Kidney (tissue), 22 donors: ENCODE measurements at regions of chr4 and their contacts with region 1.

Region 1: DNA sequence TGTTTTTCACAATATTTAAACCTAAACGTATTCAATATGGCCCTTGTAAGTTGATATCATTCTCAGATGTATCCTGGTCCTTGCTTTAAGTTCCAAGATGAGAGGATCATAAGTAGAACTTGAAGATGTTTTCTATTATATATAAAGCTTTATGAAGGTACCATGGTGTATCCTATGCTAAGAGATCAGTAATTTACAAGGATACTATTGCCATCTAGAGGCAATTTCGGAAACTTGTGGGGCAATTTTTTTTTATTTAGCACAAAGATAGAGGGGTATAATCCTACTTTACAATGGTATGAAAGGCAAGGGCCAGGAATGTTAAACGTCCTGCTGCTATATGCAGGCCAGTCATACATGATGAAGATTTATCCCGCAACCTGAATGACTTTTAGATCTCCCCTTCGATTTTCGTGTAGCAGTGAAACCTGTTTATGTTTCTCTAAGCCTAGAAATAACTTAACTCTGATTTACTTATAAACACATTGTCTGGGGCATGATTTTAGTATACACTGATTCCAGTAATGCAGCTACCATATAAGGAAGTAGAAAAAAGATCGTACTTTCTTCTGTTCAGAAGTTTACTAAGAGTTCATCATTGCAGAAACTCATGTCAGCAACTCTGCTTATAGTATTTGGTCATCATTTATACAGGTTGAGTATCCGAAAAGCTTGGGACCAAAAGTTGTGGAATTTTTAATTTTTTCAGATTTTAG is 2.6 kb downstream of the SLC25A31 start:
- DNase-seq: peak in 2 of 5 donors; percentile 56 to 67
- H3K4me3 ChIP-seq: no peak overlapping the region
- H3K27ac ChIP-seq: no peak overlapping the region
- H3K4me1 ChIP-seq: no peaks in the 10 kb centered on the region
- H3K27me3 ChIP-seq: no peaks in the 10 kb centered on the region
- CTCF ChIP-seq: peak; percentile 48

Region 2: DNA sequence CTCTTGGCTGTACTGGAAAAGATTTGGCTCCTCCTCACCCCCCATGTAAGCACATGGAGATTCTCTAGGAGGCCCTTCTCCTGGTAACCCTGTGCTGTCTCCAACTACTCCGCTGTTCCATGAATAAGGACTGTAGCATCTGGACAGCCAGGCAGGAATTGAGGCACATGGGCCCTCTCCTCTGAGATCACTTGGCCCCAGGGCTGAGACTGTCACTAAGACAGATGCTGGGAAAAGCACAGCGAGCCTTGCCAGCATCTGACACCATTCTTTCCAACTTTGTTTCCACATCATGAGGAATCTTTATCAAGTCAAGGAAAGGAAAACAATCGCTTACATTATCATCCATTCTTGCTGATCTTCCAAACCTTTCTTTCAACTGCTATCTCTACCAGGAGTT is 322.6 kb before region 1 on chr4:
- intact Hi-C with region 1: no loop called
- DNase-seq: peak in 1 of 5 donors; percentile 60
- H3K4me3 ChIP-seq: no peak overlapping the region
- H3K27ac ChIP-seq: peak overlapping the region in 1 of 2 donors; percentile 33
- H3K4me1 ChIP-seq: no peaks in the 10 kb centered on the region
- H3K27me3 ChIP-seq: no peaks in the 10 kb centered on the region
- CTCF ChIP-seq: no peak

Region 3: DNA sequence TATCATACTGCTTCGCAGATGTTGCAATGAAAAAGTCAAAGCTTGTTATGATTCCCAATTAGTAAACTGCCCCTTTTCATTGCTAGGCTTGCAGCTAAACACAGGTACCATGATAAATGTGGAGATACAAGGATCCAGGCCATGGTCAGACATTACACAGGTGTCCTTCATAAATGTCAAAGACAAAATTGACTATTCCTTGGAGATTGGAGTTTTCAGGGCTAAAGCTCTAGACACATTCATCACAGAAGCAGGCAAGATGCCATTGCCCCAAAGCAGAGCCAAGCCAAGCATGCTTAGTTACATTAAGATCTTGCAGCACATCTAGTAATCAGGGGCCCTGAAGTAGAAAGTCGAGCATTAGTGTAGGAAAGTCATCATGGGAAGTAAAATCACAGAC is 211.3 kb before region 1 on chr4:
- intact Hi-C with region 1: no loop called
- DNase-seq: peak in 1 of 5 donors; percentile 36
- H3K4me3 ChIP-seq: no peak overlapping the region
- H3K27ac ChIP-seq: no peak overlapping the region
- H3K4me1 ChIP-seq: no peaks in the 10 kb centered on the region
- H3K27me3 ChIP-seq: no peaks in the 10 kb centered on the region
- CTCF ChIP-seq: no peak

Region 4: DNA sequence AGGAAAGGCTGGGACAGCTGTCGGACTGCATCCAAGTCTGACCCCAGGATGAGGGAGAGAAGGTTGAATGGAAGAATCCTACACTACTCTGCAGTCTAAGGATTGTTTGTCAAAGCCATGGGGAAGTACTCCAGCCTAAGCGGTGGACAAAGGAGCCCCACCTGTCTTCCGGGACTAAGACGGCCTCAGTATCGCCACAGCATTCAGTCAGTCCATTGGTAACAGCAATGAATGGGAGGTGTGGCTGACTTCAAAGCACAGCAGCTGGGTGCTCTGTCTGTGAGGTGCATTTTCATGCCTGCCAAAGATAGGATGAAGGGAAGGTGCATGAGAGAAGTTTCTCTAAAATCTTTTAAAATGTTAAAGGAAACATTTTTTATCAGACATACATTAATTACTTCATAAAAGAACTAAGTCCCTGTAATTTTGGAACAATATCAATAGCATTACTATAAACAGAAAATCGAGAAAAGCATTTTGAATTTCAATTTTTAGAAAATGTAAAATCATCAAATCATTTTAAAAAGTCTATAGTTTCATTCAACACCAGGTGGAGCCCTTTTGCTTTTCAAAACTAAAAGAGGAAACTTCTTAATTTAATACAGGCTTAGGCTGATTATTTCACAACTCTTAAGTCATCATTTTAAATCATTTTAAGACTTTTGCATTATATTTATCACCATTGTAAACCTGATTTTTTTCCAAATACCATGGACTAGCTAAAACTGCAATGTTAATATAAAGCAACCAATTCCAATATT is 127.6 kb before region 1 on chr4:
- intact Hi-C with region 1: loop called (anchors 5 kb)
- DNase-seq: peak in 2 of 5 donors; percentile 11 to 64
- H3K4me3 ChIP-seq: no peak overlapping the region
- H3K27ac ChIP-seq: no peak overlapping the region
- H3K4me1 ChIP-seq: no peaks in the 10 kb centered on the region
- H3K27me3 ChIP-seq: no peaks in the 10 kb centered on the region
- CTCF ChIP-seq: peak; percentile 29